IMR-90 (cell line): ENCODE measurements at regions of chr16 and their contacts with region 1.

Region 1: DNA sequence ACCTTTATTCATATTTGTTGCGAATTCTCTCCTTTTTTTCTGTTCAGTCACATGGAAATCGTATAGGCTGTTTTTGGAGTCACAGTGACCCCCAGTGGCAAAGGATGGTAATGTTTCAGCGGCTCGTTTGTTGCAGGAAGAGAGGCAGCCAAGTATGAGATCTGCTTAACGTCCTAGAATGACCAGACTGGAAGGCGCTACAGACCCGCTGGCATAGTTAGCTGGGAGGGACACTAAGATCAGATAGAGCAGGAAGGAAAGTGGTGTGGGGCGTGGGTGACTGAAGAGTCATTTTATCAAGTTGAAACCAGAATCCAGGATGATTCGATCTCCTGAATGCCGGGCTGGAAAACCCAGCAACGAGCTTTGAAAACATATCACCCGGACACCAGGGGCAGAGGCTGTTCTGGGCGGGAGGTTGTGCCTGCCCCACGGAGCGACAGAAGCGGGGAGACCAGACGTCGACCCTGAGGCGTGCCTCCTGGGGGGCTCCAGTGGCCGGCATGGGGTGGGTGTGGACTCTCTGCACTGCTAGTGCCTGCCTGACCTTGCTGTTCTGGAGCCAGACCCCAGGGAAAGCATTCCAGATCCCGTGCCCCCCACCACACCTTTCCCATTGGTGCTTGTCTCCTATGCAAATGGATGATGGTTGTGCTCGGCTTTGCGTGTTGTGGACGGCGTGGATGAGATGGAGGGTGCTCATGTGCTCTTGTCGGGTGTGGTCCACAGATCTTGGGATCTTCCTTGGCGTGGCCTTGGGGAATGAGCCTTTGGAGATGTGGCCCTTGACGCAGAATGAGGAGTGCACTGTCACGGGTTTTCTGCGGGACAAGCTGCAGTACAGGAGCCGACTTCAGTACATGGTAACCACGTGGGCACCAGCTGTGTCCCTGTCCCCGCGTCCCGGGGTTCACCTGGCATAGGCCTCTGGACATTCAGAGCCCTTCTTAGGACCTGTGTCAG is 7.7 kb downstream of the IL34 start:
- DNase-seq: peak; percentile 78
- ATAC-seq: peak; percentile 88
- H3K4me3 ChIP-seq: peak overlapping the region; percentile 16; the same call in 1 of the 2 replicates
- H3K27ac ChIP-seq: no peak overlapping the region
- H3K4me1 ChIP-seq: peaks cover 3% of the 10 kb centered on the region
- H3K27me3 ChIP-seq: no peaks in the 10 kb centered on the region
- CTCF ChIP-seq: peak; percentile 97
- POLR2A ChIP-seq: no peak
- RAD21 ChIP-seq: peak; percentile 98

Region 2: GRCh38 chr16:70364399-70364798 is 289.7 kb before region 1 on chr16:
- CTCF ChIA-PET with region 1: interaction called, 9 read pairs
- POLR2A ChIA-PET with region 1: no interaction called
- dilution Hi-C with region 1: no loop called
- in situ Hi-C with region 1: no loop called
- intact Hi-C with region 1: loop called (anchors 1 kb)
- DNase-seq: no peak
- ATAC-seq: no peak
- H3K4me3 ChIP-seq: no peak overlapping the region
- H3K27ac ChIP-seq: no peak overlapping the region
- H3K4me1 ChIP-seq: no peaks in the 10 kb centered on the region
- H3K27me3 ChIP-seq: no peaks in the 10 kb centered on the region
- CTCF ChIP-seq: no peak
- POLR2A ChIP-seq: no peak
- RAD21 ChIP-seq: no peak

Region 3: DNA sequence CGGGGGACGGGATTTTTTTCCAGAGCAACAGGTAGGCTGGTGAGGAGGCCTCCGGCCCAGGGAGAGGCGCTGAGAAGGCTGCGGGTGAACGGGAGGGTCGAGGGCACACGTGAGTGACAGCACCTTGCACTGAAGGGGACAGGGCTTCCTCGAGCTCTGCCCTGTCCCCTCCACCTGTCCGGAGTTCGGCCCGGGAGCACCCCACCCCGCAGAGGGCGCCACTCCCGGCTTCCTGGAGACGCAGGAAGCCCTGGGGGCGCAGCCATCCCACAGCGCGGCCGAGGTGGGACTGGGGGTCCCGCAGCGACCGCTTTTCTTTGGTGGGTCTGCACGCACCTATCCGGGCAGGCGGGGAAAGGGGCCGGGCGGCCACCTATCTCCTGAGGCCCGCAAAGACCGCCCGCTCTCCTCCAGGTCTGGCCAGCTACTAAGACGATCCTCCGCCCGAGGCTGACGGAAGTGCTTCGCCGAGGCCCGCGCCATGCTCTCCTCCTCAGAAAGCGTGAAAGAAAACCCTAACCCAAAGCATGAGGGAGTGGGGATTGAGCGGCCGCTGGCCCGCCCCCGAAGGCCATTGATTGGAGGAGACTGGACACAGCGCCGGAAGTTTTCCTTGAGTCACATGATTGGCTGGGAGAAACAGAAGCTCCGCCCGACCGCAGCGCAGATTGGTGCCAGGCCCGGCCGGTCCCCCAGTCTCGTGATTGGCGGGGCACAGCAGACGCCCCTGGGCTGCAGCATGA is 273.1 kb before region 1 on chr16:
- CTCF ChIA-PET with region 1: interaction called, 3 read pairs
- POLR2A ChIA-PET with region 1: no interaction called
- dilution Hi-C with region 1: no loop called
- in situ Hi-C with region 1: no loop called
- intact Hi-C with region 1: loop called (anchors 5 kb)
- DNase-seq: peak; percentile 96
- ATAC-seq: peak; percentile 95
- H3K4me3 ChIP-seq: peak overlapping the region; percentile 63
- H3K27ac ChIP-seq: peak overlapping the region; percentile 79
- H3K4me1 ChIP-seq: no peaks in the 10 kb centered on the region; the same call in 1 of the 2 replicates
- H3K27me3 ChIP-seq: no peaks in the 10 kb centered on the region
- CTCF ChIP-seq: peak; percentile 26; the same call in 1 of the 2 replicates
- POLR2A ChIP-seq: peak; percentile 88
- RAD21 ChIP-seq: no peak

Region 4: GRCh38 chr16:70529051-70529777 is 124.9 kb before region 1 on chr16:
- CTCF ChIA-PET with region 1: no interaction called
- POLR2A ChIA-PET with region 1: interaction called, 6 read pairs
- dilution Hi-C with region 1: no loop called
- in situ Hi-C with region 1: loop called (anchors 5 kb)
- intact Hi-C with region 1: loop called (anchors 1 kb)
- DNase-seq: peak; percentile 79
- ATAC-seq: peak; percentile 76
- H3K4me3 ChIP-seq: no peak overlapping the region
- H3K27ac ChIP-seq: peak overlapping the region; percentile 8; the same call in 1 of the 2 replicates
- H3K4me1 ChIP-seq: peaks cover 6% of the 10 kb centered on the region
- H3K27me3 ChIP-seq: no peaks in the 10 kb centered on the region
- CTCF ChIP-seq: peak; percentile 74
- POLR2A ChIP-seq: no peak
- RAD21 ChIP-seq: peak; percentile 64

Region 5: GRCh38 chr16:70534971-70535370 is 119.1 kb before region 1 on chr16:
- CTCF ChIA-PET with region 1: no interaction called
- POLR2A ChIA-PET with region 1: interaction called, 6 read pairs
- dilution Hi-C with region 1: no loop called
- in situ Hi-C with region 1: loop called (anchors 5 kb)
- intact Hi-C with region 1: no loop called
- DNase-seq: no peak
- ATAC-seq: no peak
- H3K4me3 ChIP-seq: no peak overlapping the region
- H3K27ac ChIP-seq: no peak overlapping the region
- H3K4me1 ChIP-seq: no peaks in the 10 kb centered on the region
- H3K27me3 ChIP-seq: no peaks in the 10 kb centered on the region
- CTCF ChIP-seq: no peak
- POLR2A ChIP-seq: no peak
- RAD21 ChIP-seq: no peak

Region 6: DNA sequence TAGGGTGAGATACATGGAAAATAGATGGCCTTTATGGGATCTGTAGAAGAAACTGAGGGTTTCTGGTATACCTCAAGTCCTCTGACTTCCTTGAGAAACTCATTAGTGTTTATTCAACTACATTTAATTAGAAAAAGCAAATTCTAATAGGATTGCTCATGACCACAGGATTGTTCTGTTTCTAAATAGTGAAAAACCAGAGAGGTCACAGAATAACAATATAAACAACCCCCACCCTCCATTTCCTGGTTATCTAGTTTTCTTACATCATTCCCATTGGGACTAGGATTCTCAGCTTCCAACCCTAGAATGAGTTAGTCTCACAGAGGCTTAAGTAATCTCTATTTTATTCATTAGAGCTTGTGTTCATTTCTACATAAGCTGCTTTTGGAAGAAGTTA is 100.4 kb before region 1 on chr16:
- CTCF ChIA-PET with region 1: interaction called, 3 read pairs
- POLR2A ChIA-PET with region 1: no interaction called
- dilution Hi-C with region 1: no loop called
- in situ Hi-C with region 1: no loop called
- intact Hi-C with region 1: loop called (anchors 2 kb)
- DNase-seq: peak; percentile 94
- ATAC-seq: peak; percentile 85
- H3K4me3 ChIP-seq: no peak overlapping the region
- H3K27ac ChIP-seq: peak overlapping the region; percentile 91
- H3K4me1 ChIP-seq: peaks cover 27% of the 10 kb centered on the region
- H3K27me3 ChIP-seq: no peaks in the 10 kb centered on the region
- CTCF ChIP-seq: no peak
- POLR2A ChIP-seq: no peak
- RAD21 ChIP-seq: no peak

Region 7: DNA sequence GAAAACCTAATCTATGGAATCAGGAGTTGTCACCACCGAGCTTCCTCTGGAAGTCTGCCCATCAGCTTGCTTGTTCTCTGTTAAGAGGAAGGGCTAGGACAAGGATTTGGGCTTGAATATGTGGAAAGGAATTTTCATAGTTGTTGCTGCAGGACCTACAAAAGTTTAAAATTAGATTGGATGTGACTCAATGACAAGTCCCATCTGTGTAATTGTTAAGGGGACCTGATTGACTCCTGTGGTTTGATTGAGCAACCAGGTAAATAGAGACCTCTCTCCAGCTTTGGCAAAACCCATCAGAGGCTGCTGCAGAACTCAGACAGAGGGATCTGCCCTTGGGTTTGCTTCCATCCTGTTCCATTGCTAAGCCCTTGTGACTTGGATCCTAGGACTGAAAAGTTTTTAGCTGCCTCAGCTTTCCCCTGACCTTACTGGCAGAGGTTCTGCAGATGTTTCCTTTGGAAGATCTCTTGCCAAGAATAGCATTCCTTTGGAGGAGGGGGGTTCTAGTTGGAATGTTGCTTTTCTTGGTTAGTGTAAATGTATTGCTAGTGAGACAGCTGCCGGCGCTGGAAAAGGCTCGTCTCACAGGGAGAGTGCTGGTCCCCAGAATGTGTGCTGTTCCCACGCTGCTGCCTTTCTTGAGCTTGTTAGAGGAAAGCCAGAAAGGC is 80.5 kb before region 1 on chr16:
- CTCF ChIA-PET with region 1: interaction called, 3 read pairs
- POLR2A ChIA-PET with region 1: no interaction called
- dilution Hi-C with region 1: no loop called
- in situ Hi-C with region 1: loop called (anchors 5 kb)
- intact Hi-C with region 1: loop called (anchors 5 kb)
- DNase-seq: peak; percentile 97
- ATAC-seq: peak; percentile 73
- H3K4me3 ChIP-seq: no peak overlapping the region
- H3K27ac ChIP-seq: peak overlapping the region; percentile 79; the same call in 1 of the 2 replicates
- H3K4me1 ChIP-seq: peaks cover 40% of the 10 kb centered on the region
- H3K27me3 ChIP-seq: no peaks in the 10 kb centered on the region
- CTCF ChIP-seq: no peak
- POLR2A ChIP-seq: no peak
- RAD21 ChIP-seq: no peak